SK-N-SH (cell line): ENCODE measurements at regions of chr14 and their contacts with region 1.

Region 1: GRCh38 chr14:50321009-50321660 is 9.0 kb downstream of the DMAC2L start:
- DNase-seq: peak; percentile 72
- H3K4me3 ChIP-seq: peak overlapping the region; percentile 38 to 47
- H3K27ac ChIP-seq: peak overlapping the region; percentile 83 to 95
- H3K4me1 ChIP-seq: peaks cover 0 to 4% of the 10 kb centered on the region in 2 experiments; a peak in 3 of 4 replicates
- H3K27me3 ChIP-seq: no peaks in the 10 kb centered on the region
- CTCF ChIP-seq: peak; percentile 96
- EP300 ChIP-seq: no peak
- RAD21 ChIP-seq: peak; percentile 80

Region 2: GRCh38 chr14:49447540-49448107 is 873.5 kb before region 1 on chr14:
- CTCF ChIA-PET with region 1: no interaction called
- POLR2A ChIA-PET with region 1: no interaction called
- DNase-seq: no peak
- H3K4me3 ChIP-seq: no peak overlapping the region
- H3K27ac ChIP-seq: no peak overlapping the region
- H3K4me1 ChIP-seq: peaks cover 0 to 4% of the 10 kb centered on the region in 2 experiments; a peak in 1 of 4 replicates
- H3K27me3 ChIP-seq: no peaks in the 10 kb centered on the region
- CTCF ChIP-seq: no peak
- EP300 ChIP-seq: no peak
- RAD21 ChIP-seq: no peak

Region 3: DNA sequence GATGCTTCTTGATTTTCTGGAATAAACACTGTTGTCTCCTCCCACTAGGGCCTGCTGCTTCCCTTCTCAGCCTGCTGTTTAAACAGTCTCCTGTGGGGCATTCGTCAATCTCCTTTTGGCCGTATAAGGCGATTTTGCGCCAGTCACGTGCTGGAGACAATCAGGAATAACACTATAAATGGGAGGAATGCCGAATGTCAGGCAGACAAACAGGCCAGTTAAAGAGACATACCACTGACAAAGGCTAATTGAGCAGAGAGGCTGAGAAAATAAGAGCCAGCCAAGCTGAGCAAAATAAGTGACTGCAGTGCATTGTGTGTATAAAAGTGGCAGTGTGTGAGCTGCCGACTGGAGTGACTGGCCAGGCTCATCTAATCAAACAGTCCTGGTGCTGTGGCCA is 14.3 kb after region 1 on chr14:
- CTCF ChIA-PET with region 1: interaction called, 140 read pairs
- POLR2A ChIA-PET with region 1: interaction called, 3 read pairs
- DNase-seq: peak; percentile 55
- H3K4me3 ChIP-seq: no peak overlapping the region
- H3K27ac ChIP-seq: peak overlapping the region; percentile 49 to 98; a peak in 3 of 4 replicates
- H3K4me1 ChIP-seq: peaks cover 17 to 25% of the 10 kb centered on the region in 2 experiments; a peak in 3 of 4 replicates
- H3K27me3 ChIP-seq: no peaks in the 10 kb centered on the region
- CTCF ChIP-seq: peak; percentile 16; the same call in 1 of the 2 replicates
- EP300 ChIP-seq: no peak
- RAD21 ChIP-seq: 0 out of 2 replicates have a peak, but pooled peaks have one; percentile 30

Region 4: DNA sequence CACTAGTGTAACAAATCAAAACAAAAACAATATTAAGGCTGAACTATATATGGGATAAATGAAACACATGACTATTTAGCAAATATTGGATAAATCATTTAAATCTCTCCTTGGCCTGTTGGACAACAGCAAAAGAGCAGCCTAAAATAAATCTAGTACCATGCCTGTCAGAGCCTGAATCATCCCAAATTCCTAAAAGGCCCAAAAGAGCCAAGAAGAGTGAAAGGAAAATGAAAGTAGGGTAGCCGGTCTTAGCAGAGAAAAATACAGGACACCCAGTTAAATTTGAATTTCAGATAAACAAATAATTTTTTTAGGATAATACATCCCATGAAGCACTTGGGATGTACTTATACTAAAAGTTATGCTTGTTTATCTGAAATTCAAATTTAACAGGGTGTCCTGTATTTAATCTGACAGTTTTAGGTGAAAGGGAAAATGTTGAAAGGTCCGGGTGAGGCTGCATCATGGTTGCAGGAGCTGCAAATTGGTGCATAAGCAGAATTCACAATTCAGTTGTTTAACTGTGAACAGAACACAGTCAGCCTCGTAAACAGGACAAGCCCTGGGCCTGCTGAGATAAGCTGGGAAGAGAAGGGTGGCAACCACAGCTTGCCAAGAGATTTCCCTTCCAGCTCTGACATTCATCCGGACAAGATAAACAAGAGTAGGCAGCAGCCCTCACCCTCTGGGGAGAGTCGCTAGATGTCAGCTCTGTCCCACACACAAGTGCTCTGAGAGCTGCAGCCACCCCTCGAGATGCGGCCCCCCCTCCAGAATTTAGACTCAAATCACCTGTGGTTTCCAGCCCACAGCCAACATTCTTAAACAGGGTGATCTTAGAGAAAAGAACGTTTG is 21.3 kb after region 1 on chr14:
- CTCF ChIA-PET with region 1: interaction called, 65 read pairs
- POLR2A ChIA-PET with region 1: interaction called, 4 read pairs
- DNase-seq: peak; percentile 78
- H3K4me3 ChIP-seq: peak overlapping the region; percentile 7 to 31; a peak in 2 of 4 replicates
- H3K27ac ChIP-seq: peak overlapping the region; percentile 27 to 70; a peak in 3 of 4 replicates
- H3K4me1 ChIP-seq: peaks cover 16 to 17% of the 10 kb centered on the region in 2 experiments
- H3K27me3 ChIP-seq: no peaks in the 10 kb centered on the region
- CTCF ChIP-seq: peak; percentile 54
- EP300 ChIP-seq: no peak
- RAD21 ChIP-seq: peak; percentile 91

Region 5: GRCh38 chr14:50542941-50543418 is 221.8 kb after region 1 on chr14:
- CTCF ChIA-PET with region 1: interaction called, 12 read pairs
- POLR2A ChIA-PET with region 1: interaction called, 3 read pairs
- DNase-seq: peak; percentile 51
- H3K4me3 ChIP-seq: no peak overlapping the region; a peak in 1 of 4 replicates
- H3K27ac ChIP-seq: peak overlapping the region in 1 of 2 experiments; percentile 48; a peak in 2 of 4 replicates
- H3K4me1 ChIP-seq: no peaks in the 10 kb centered on the region; a peak in 1 of 4 replicates
- H3K27me3 ChIP-seq: no peaks in the 10 kb centered on the region
- CTCF ChIP-seq: peak; percentile 68
- EP300 ChIP-seq: peak in 1 of 2 experiments; percentile 73; a peak in 1 of 4 replicates
- RAD21 ChIP-seq: peak; percentile 62